ENCODE measurements at regions of chr20 and their contacts with region 1.

Region 1: GRCh38 chr20:32079655-32080109 is 27.6 kb downstream of the HCK start:
- DNase-seq: no peak
- ATAC-seq: no peak
- H3K4me3 ChIP-seq: no peak overlapping the region
- H3K27ac ChIP-seq: no peak overlapping the region
- H3K4me1 ChIP-seq: peaks cover 0 to 12% (median 0%) of the 10 kb centered on the region in 9 donors
- H3K27me3 ChIP-seq: peaks cover 0 to 25% (median 4%) of the 10 kb centered on the region in 7 donors
- CTCF ChIP-seq: no peak

Region 2: GRCh38 chr20:31842471-31843157 is 237.1 kb before region 1 on chr20:
- intact Hi-C with region 1: loop called in 1 of 10 experiments (anchors 10 kb)
- DNase-seq: peak; percentile 76 to 84
- ATAC-seq: peak; percentile 66 to 86 (median 74)
- H3K4me3 ChIP-seq: peak overlapping the region in 8 of 10 donors; percentile 31 to 63 (median 54)
- H3K27ac ChIP-seq: peak overlapping the region; percentile 37 to 91 (median 78)
- H3K4me1 ChIP-seq: peaks cover 6 to 78% (median 35%) of the 10 kb centered on the region in 9 donors
- H3K27me3 ChIP-seq: peaks cover 0 to 4% (median 0%) of the 10 kb centered on the region in 7 donors
- CTCF ChIP-seq: no peak

Region 3: DNA sequence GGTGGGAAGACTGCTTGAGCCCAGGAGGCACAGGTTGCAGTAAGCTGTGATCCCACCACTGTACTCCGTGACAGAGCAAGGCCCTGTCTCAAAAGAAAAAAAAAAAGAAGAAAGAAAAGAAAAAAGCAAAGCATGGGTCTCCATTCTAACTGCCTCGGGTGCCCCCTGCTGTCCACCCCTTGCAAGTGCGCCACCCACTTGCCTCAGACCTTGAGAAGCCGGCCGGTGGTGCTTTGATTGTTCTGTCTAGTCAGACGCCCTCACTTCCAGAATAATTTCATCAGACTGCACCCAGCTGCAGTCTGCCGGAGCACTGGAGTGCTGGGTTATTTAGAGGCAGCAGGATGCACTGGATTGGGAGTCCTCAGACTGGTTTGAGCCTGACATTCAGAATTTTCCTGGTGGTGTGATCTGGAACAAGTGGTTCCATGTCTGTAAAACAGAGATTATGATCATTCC is 12.2 kb after region 1 on chr20:
- intact Hi-C with region 1: no loop called
- DNase-seq: peak; percentile 66 to 68
- ATAC-seq: peak in 6 of 8 donors; percentile 28 to 85 (median 76)
- H3K4me3 ChIP-seq: no peak overlapping the region
- H3K27ac ChIP-seq: no peak overlapping the region
- H3K4me1 ChIP-seq: peaks cover 0 to 6% (median 0%) of the 10 kb centered on the region in 9 donors
- H3K27me3 ChIP-seq: peaks cover 0 to 10% (median 0%) of the 10 kb centered on the region in 7 donors
- CTCF ChIP-seq: peak; percentile 76 to 98 (median 92)